Calu3 (cell line): ENCODE measurements at regions of chr17 and their contacts with region 1.

Region 1: DNA sequence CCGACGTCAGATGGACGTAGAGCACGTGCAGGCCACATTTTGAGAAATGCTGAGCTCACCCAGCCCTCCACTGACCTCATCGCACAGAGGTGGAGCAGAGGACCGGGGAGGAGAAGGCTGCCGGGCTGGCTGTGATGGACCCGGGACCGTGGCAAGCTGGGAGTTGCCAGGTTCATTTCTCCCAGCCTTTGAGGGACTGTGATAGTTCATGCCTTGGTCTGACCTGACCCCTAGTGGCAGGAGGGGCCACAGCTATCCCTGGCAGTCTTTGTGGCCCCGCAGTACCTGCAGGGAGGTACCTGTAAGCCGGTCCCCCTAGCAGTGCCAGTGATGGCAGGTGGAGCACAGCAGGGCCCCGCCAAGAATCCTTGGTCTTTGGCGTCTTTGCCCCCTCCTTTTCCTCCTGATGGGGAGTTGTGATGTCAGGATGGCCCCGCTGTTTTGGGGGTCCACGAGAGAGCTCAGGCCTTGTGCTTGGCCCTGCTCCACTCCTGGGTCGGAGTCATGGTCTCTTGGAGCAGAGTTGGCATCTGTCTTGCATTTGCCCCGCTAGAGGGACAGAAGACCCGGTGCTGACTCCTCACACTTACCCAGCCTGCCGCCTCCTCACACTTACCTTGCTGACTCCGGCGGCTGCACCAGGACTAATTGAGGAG is 50.4 kb downstream of the OR1D5 start:
- DNase-seq: peak; percentile 63
- H3K4me3 Mint-ChIP-seq: no peak overlapping the region
- H3K27ac Mint-ChIP-seq: no peak overlapping the region
- H3K4me1 Mint-ChIP-seq: no peaks in the 10 kb centered on the region
- H3K27me3 Mint-ChIP-seq: no peaks in the 10 kb centered on the region
- CTCF ChIP-seq: peak; percentile 40

Region 2: GRCh38 chr17:2828397-2829038 is 184.5 kb before region 1 on chr17:
- CTCF ChIA-PET with region 1: interaction called, 7 read pairs
- intact Hi-C with region 1: loop called (anchors 1 kb)
- DNase-seq: peak; percentile 80
- H3K4me3 Mint-ChIP-seq: no peak overlapping the region
- H3K27ac Mint-ChIP-seq: no peak overlapping the region
- H3K4me1 Mint-ChIP-seq: peaks cover 10% of the 10 kb centered on the region
- H3K27me3 Mint-ChIP-seq: peaks cover 24% of the 10 kb centered on the region
- CTCF ChIP-seq: peak; percentile 83